ENCODE measurements at regions of chr15 and their contacts with region 1.

Region 1: GRCh38 chr15:64841258-64842095 is at the start of gene PLEKHO2:
- DNase-seq: peak; percentile 96 to 97
- H3K4me3 ChIP-seq: peak within 1 kb of the TSS; percentile 88 to 97 (median 97)
- H3K27ac ChIP-seq: peak within 1 kb of the TSS; percentile 81 to 95 (median 93)
- H3K4me1 ChIP-seq: peaks cover 40 to 41% of the 10 kb centered on the region in 2 donors
- H3K27me3 ChIP-seq: no peaks in the 10 kb centered on the region
- CTCF ChIP-seq: no peak
- POLR2A ChIP-seq: peak; percentile 59 to 80
- total RNA-seq, gene PLEKHO2: 31.3 to 53.6 (median 46.1) TPM

Region 2: DNA sequence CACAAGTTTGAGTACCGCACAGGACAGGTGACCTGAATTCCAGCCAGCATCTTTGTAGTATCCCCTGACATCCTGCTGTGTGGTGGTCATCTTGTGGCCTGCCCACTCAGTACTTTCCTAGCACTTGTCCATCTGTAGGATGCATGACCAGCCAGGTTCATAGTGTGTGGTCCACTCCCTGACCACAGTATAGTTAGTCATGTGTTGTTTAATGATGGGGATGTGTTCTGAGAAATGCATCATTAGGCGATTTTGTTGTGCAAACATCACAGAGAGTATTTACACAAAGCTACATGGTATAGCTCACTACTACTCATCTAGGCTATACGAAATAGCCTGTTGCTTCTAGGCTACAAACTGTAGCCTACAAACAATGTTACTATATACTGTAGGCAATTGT is 49.2 kb before region 1 on chr15:
- intact Hi-C with region 1: no loop called
- DNase-seq: no peak
- H3K4me3 ChIP-seq: no peak overlapping the region
- H3K27ac ChIP-seq: no peak overlapping the region
- H3K4me1 ChIP-seq: peaks cover 0 to 6% of the 10 kb centered on the region in 2 donors
- H3K27me3 ChIP-seq: no peaks in the 10 kb centered on the region
- CTCF ChIP-seq: no peak
- POLR2A ChIP-seq: no peak

Region 3: DNA sequence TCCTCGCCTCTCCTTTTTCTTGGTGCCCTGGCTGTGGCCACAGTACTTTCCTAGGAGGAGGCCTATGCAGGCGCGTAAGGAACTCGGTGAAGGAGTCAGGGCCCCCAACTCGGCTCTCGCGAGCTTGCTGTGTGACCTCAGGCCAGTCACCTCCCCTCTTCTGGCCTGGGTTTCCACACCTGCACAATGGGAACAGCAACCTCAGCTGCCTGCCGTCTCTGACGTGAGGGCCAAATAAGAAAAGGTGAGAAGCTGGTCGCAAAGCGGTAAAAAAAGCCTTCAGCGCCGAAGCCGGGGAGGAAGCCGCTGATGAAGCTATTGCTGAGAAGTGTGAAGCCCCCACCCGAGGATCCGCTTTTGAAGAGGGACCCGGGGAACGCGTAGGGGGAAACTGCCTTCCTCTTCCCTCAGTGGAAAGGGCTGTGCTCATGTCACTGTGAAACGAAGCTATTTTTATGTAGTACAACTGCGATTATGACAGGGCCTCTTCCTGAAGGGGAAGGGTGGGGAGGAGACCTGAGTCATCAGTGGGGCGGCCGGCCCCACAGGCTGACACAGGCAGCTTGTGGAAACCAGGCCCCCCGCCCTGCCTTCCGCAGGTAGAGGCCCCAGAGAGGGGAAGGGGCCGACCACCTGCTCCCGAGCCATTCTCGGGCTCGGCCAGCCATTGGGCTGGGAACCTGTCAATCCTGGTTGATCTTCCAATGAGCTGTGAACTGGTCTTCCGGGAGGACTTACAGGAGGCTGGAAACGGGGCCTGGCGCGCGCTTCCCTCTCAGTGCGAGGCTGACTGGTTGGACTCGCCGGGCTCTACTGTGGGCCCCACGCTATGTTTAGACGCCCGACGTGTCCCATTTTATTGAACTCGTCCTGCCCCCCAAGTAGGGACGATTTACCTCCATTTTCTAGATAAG is 52.3 kb after region 1 on chr15:
- intact Hi-C with region 1: loop called (anchors 5 kb)
- DNase-seq: peak; percentile 91 to 94
- H3K4me3 ChIP-seq: no peak overlapping the region
- H3K27ac ChIP-seq: peak overlapping the region; percentile 67 to 82 (median 77)
- H3K4me1 ChIP-seq: peaks cover 20 to 50% of the 10 kb centered on the region in 2 donors
- H3K27me3 ChIP-seq: no peaks in the 10 kb centered on the region
- CTCF ChIP-seq: no peak
- POLR2A ChIP-seq: peak in 1 of 2 donors; percentile 67

Region 4: GRCh38 chr15:64989416-64990167 is 148.1 kb after region 1 on chr15 and contains the start of gene SPG21:
- intact Hi-C with region 1: loop called (anchors 10 kb)
- DNase-seq: peak; percentile 94 to 95
- H3K4me3 ChIP-seq: peak within 1 kb of the TSS; percentile 70 to 100 (median 100)
- H3K27ac ChIP-seq: peak within 1 kb of the TSS; percentile 90 to 92 (median 92)
- H3K4me1 ChIP-seq: peaks cover 0 to 34% of the 10 kb centered on the region in 2 donors
- H3K27me3 ChIP-seq: no peaks in the 10 kb centered on the region
- CTCF ChIP-seq: no peak
- POLR2A ChIP-seq: peak; percentile 18 to 92
- total RNA-seq, gene SPG21: 119 to 149 (median 122) TPM

Measured in thyroid gland (tissue), 4 donors.